ENCODE measurements at regions of chr9 and their contacts with region 1.

Region 1: GRCh38 chr9:91193658-91194391 is 167.9 kb downstream of the AUH start:
- DNase-seq: peak; percentile 86
- H3K4me3 Mint-ChIP-seq: peak overlapping the region; percentile 72
- H3K27ac Mint-ChIP-seq: peak overlapping the region; percentile 97
- H3K4me1 Mint-ChIP-seq: peaks cover 45% of the 10 kb centered on the region
- H3K27me3 Mint-ChIP-seq: no peaks in the 10 kb centered on the region

Region 2: GRCh38 chr9:91047993-91048607 is 145.7 kb before region 1 on chr9:
- CTCF ChIA-PET with region 1: interaction called, 3 read pairs
- intact Hi-C with region 1: loop called (anchors 1 kb)
- DNase-seq: peak; percentile 75
- H3K4me3 Mint-ChIP-seq: peak overlapping the region; percentile 20
- H3K27ac Mint-ChIP-seq: peak overlapping the region; percentile 89
- H3K4me1 Mint-ChIP-seq: peaks cover 44% of the 10 kb centered on the region
- H3K27me3 Mint-ChIP-seq: peaks cover 36% of the 10 kb centered on the region

Region 3: DNA sequence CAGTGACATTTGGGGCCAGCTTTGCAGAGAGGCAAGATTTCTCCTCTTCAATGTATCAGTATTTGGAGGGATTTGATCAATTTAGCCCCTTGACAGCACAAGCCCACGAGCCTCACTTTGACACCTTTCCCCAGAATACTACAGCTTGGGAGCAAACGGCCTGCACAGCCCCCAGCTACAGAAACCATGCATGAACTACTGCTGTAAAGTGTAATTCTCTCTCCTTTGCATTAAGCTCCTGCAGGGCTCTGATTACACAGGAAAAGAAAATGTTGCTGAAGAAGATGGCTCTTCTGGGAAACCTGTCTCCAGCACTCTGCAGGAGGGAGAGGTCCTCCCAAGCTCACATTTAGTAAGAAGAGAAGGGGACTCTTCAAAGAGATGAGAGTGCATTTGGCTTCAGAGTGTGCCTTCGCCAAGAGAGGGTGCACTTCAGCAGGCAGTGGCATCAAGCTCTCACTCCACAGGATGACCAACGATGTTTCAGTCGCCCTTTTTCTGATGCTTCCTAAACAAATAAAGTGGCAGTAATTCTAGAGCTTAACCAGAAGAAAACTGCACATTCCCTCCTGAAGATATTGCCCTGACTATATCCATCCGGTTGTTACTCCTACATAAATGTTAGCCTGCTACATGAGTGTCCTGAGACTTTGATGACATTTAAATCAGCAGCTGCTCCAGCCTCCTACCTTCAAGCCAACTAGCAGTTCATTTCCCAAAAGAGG is 104.3 kb before region 1 on chr9:
- CTCF ChIA-PET with region 1: no interaction called
- intact Hi-C with region 1: loop called (anchors 5 kb)
- DNase-seq: peak; percentile 62
- H3K4me3 Mint-ChIP-seq: no peak overlapping the region
- H3K27ac Mint-ChIP-seq: no peak overlapping the region
- H3K4me1 Mint-ChIP-seq: peaks cover 8% of the 10 kb centered on the region
- H3K27me3 Mint-ChIP-seq: peaks cover 6% of the 10 kb centered on the region

Region 4: GRCh38 chr9:91131433-91131839 is 62.4 kb before region 1 on chr9:
- CTCF ChIA-PET with region 1: no interaction called
- intact Hi-C with region 1: loop called (anchors 1 kb)
- DNase-seq: peak; percentile 86
- H3K4me3 Mint-ChIP-seq: no peak overlapping the region
- H3K27ac Mint-ChIP-seq: peak overlapping the region; percentile 82
- H3K4me1 Mint-ChIP-seq: peaks cover 15% of the 10 kb centered on the region
- H3K27me3 Mint-ChIP-seq: peaks cover 11% of the 10 kb centered on the region

Region 5: GRCh38 chr9:91164724-91165520 is 28.9 kb before region 1 on chr9:
- CTCF ChIA-PET with region 1: interaction called, 6 read pairs
- intact Hi-C with region 1: loop called (anchors 1 kb)
- DNase-seq: peak; percentile 78
- H3K4me3 Mint-ChIP-seq: no peak overlapping the region
- H3K27ac Mint-ChIP-seq: peak overlapping the region; percentile 54
- H3K4me1 Mint-ChIP-seq: peaks cover 37% of the 10 kb centered on the region
- H3K27me3 Mint-ChIP-seq: peaks cover 9% of the 10 kb centered on the region

Region 6: GRCh38 chr9:91359734-91360470 is 166.1 kb after region 1 on chr9:
- CTCF ChIA-PET with region 1: interaction called, 6 read pairs
- intact Hi-C with region 1: loop called (anchors 1 kb)
- DNase-seq: no peak
- H3K4me3 Mint-ChIP-seq: peak overlapping the region; percentile 91
- H3K27ac Mint-ChIP-seq: peak overlapping the region; percentile 54
- H3K4me1 Mint-ChIP-seq: peaks cover 47% of the 10 kb centered on the region
- H3K27me3 Mint-ChIP-seq: no peaks in the 10 kb centered on the region

Region 7: DNA sequence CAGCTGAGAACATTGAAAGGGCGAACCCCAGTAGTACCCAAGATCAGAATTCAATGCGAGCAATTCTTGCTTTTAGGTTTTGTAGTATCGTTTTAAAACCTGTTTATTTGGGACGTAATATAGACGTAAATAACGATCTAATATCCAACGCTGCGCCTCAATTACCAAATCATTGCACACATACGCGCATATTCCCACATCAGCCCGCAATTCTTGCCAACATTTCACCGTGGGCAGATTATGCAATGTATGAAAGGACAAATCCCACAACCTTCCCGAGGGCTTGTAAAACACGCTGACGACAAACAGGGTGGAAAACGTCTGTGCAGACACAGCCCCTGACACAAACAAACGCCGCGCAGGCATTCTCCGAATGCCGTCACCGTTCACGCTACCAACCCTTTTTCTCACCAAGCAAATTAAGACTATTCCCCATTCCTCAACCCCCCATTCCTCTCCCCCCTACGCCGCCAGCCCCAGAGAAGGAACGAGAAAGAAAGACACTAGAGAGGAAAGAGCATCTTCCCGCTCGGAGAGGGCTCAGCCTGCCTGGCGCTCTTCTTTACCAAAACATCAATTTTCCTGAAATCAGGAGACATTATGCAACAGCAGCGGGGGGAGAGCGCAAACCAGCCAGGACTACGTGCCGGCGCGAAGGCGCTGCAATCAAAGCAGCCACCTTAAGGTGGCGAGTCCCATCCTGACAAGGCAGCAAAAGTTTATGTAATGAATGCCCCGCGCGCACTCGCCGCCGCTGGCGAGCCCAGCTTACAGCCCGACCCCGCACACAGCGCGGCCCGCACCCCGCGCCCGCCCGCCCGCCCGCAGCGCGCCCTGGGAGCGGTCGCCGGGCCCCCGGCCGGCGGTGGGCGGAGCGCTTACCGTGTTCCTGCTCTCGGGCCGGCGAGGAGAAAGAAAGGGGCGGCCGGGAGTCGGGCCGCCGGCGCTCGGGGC is 229.2 kb after region 1 on chr9:
- CTCF ChIA-PET with region 1: interaction called, 3 read pairs
- intact Hi-C with region 1: loop called (anchors 1 kb)
- DNase-seq: peak; percentile 74
- H3K4me3 Mint-ChIP-seq: peak overlapping the region; percentile 94
- H3K27ac Mint-ChIP-seq: peak overlapping the region; percentile 81
- H3K4me1 Mint-ChIP-seq: peaks cover 57% of the 10 kb centered on the region
- H3K27me3 Mint-ChIP-seq: peaks cover 9% of the 10 kb centered on the region